PC-3 (cell line): ENCODE measurements at regions of chr14 and their contacts with region 1.

Region 1: GRCh38 chr14:28608851-28609828 is 157.4 kb upstream of the FOXG1 start:
- DNase-seq: peak; percentile 82
- ATAC-seq: peak; percentile 80
- H3K4me3 ChIP-seq: no peak overlapping the region
- H3K27ac ChIP-seq: no peak overlapping the region
- H3K4me1 ChIP-seq: peaks cover 5% of the 10 kb centered on the region; the same call in 1 of the 2 replicates
- H3K27me3 ChIP-seq: no peaks in the 10 kb centered on the region
- CTCF ChIP-seq: peak; percentile 97

Region 2: DNA sequence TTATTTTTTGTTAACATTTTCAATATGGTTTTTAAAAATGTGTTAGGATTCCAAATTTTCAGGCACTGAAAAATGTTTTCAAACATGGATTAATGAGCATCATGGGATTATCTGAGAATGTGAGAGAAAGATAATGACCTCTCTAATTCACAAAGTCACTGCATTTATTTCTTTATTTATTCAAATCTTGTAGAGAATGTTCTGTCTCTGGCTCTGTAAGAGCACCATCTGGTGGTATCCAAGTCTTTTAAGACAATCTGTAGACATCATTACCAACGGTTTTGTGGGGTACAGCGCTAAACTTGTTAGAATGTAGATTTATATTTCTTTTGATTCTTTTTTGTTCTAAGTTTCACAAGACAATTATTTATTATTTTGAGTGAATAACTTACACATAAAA is 1055.3 kb before region 1 on chr14:
- CTCF ChIA-PET with region 1: no interaction called
- POLR2A ChIA-PET with region 1: no interaction called
- intact Hi-C with region 1: loop called (anchors 5 kb)
- DNase-seq: peak; percentile 29
- ATAC-seq: peak; percentile 38; the same call in 1 of the 2 replicates
- H3K4me3 ChIP-seq: no peak overlapping the region
- H3K27ac ChIP-seq: no peak overlapping the region
- H3K4me1 ChIP-seq: no peaks in the 10 kb centered on the region
- H3K27me3 ChIP-seq: no peaks in the 10 kb centered on the region
- CTCF ChIP-seq: peak; percentile 63

Region 3: DNA sequence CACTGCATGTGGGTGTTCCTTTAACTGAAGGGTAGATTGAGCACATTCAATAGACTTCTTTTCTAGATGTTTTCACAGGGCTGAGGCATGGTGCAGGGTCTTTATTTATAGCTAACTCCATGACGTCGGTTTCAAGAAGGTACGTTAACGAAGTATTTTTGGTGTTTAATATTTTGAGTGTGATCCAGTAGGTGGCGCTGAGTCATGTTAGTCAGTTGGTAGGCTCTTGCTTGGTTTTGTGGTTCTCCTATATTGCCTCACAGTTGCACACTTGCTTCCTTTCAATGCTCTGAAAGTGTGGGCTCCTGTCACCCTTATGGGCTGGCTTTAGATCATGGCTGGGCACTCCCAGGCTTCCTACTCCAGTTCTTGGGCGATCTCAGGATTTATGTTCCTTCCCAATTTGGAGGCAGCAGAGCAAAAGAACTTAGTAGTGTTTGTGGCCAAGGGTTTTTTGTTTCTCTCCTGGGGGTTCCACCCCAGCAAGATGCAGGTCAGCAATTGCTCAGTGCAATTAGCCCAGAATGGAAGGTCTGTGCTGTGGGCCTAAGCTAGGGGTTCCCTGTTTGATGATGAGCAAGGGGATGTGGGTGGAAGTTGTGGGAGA is 314.2 kb before region 1 on chr14:
- CTCF ChIA-PET with region 1: no interaction called
- POLR2A ChIA-PET with region 1: no interaction called
- intact Hi-C with region 1: loop called (anchors 2 kb)
- DNase-seq: peak; percentile 60
- ATAC-seq: peak; percentile 71
- H3K4me3 ChIP-seq: no peak overlapping the region
- H3K27ac ChIP-seq: no peak overlapping the region
- H3K4me1 ChIP-seq: no peaks in the 10 kb centered on the region
- H3K27me3 ChIP-seq: no peaks in the 10 kb centered on the region
- CTCF ChIP-seq: peak; percentile 81

Region 4: DNA sequence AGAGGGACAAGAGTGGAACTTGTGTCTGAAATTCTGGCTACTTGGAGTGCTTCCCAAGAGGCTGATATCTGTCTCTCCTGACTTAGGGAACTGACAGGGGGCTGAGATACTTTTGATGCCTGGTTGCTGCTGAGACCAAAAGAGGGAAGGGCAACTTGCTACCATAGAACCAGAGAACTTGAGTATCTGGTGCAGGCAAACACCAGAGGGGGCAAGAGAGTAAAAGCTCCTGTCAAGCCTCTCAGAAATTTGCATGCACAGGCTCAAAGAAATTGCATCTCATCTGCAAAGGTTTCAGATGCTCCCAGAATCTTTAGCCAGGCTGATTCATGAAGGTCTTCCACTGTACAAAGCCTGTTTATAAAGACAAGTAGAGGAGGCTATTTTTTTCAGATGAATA is 233.8 kb before region 1 on chr14:
- CTCF ChIA-PET with region 1: no interaction called
- POLR2A ChIA-PET with region 1: no interaction called
- intact Hi-C with region 1: loop called (anchors 5 kb)
- DNase-seq: peak; percentile 56
- ATAC-seq: peak; percentile 59; the same call in 1 of the 2 replicates
- H3K4me3 ChIP-seq: no peak overlapping the region
- H3K27ac ChIP-seq: no peak overlapping the region
- H3K4me1 ChIP-seq: peaks cover under 1% of the 10 kb centered on the region
- H3K27me3 ChIP-seq: no peaks in the 10 kb centered on the region
- CTCF ChIP-seq: peak; percentile 79

Region 5: DNA sequence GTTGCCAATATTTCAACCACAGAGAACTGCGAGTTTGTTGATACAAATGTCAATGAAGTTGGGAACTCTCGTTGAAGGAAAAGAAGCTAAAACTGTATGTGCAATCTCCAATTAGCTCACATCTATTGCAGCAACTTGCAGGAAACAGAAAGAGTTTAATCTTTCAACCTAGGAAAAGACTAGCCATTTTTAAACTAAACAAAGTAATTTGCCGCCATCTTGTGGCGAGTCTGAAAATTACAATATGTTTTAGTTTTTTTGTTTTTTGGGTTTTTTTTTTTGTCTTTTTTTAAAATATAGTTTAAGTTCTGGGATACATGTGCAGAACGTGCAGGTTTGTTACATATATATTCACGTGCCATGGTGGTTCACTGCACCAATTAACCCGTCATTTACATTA is 26.2 kb after region 1 on chr14:
- CTCF ChIA-PET with region 1: no interaction called
- POLR2A ChIA-PET with region 1: no interaction called
- intact Hi-C with region 1: loop called (anchors 1 kb)
- DNase-seq: peak; percentile 65
- ATAC-seq: peak; percentile 78
- H3K4me3 ChIP-seq: no peak overlapping the region
- H3K27ac ChIP-seq: no peak overlapping the region
- H3K4me1 ChIP-seq: 0 out of 2 replicates have a peak, but pooled peaks cover 6% of the 10 kb centered on the region
- H3K27me3 ChIP-seq: no peaks in the 10 kb centered on the region
- CTCF ChIP-seq: peak; percentile 71; the same call in 1 of the 2 replicates

Region 6: GRCh38 chr14:28676479-28676878 is 67.3 kb after region 1 on chr14:
- CTCF ChIA-PET with region 1: no interaction called
- POLR2A ChIA-PET with region 1: no interaction called
- intact Hi-C with region 1: no loop called
- DNase-seq: peak; percentile 98
- ATAC-seq: peak; percentile 96
- H3K4me3 ChIP-seq: peak overlapping the region; percentile 13; the same call in 1 of the 2 replicates
- H3K27ac ChIP-seq: peak overlapping the region; percentile 76
- H3K4me1 ChIP-seq: peaks cover 58% of the 10 kb centered on the region
- H3K27me3 ChIP-seq: no peaks in the 10 kb centered on the region
- CTCF ChIP-seq: no peak

Region 7: GRCh38 chr14:28754209-28754985 is 145.3 kb after region 1 on chr14:
- CTCF ChIA-PET with region 1: no interaction called
- POLR2A ChIA-PET with region 1: no interaction called
- intact Hi-C with region 1: no loop called
- DNase-seq: peak; percentile 78
- ATAC-seq: peak; percentile 68
- H3K4me3 ChIP-seq: no peak overlapping the region
- H3K27ac ChIP-seq: no peak overlapping the region
- H3K4me1 ChIP-seq: peaks cover 4% of the 10 kb centered on the region; the same call in 1 of the 2 replicates
- H3K27me3 ChIP-seq: peaks cover 51% of the 10 kb centered on the region
- CTCF ChIP-seq: peak; percentile 94